Activated CD4-positive, alpha-beta memory T cell treated with anti-CD3 and anti-CD28 coated beads for 36 hours (primary cell): ENCODE measurements at regions of chr11 and their contacts with region 1.

Region 1: GRCh38 chr11:47213985-47214564 is 699 bp upstream of the DDB2 start:
- DNase-seq: peak; percentile 94
- H3K4me3 Mint-ChIP-seq: peak overlapping the region; percentile 97
- H3K27ac Mint-ChIP-seq: peak overlapping the region; percentile 99
- H3K4me1 Mint-ChIP-seq: peaks cover 28% of the 10 kb centered on the region
- H3K27me3 Mint-ChIP-seq: no peaks in the 10 kb centered on the region

Region 2: DNA sequence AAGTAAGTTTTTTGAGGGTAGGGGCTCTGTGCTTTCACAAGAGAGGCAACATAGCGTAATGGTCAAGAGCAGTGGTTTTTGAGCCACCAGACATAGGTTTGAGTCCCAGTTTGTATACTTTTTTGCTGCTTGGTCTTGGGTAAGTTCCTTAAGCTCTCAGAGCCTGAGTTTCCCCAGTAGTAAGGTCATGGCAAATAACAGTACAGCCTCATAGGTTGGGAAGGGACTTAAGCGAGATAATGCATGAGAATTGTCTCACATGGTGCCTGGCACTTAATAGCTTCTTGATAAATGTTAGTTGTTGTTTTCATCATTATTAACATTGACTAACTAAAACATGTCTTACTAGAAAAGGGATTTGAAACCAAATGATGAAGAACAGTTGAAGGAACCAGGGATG is 120.5 kb before region 1 on chr11:
- CTCF ChIA-PET with region 1: no interaction called
- POLR2A ChIA-PET with region 1: no interaction called
- intact Hi-C with region 1: no loop called
- DNase-seq: no peak
- H3K4me3 Mint-ChIP-seq: no peak overlapping the region
- H3K27ac Mint-ChIP-seq: no peak overlapping the region
- H3K4me1 Mint-ChIP-seq: no peaks in the 10 kb centered on the region
- H3K27me3 Mint-ChIP-seq: no peaks in the 10 kb centered on the region

Region 3: DNA sequence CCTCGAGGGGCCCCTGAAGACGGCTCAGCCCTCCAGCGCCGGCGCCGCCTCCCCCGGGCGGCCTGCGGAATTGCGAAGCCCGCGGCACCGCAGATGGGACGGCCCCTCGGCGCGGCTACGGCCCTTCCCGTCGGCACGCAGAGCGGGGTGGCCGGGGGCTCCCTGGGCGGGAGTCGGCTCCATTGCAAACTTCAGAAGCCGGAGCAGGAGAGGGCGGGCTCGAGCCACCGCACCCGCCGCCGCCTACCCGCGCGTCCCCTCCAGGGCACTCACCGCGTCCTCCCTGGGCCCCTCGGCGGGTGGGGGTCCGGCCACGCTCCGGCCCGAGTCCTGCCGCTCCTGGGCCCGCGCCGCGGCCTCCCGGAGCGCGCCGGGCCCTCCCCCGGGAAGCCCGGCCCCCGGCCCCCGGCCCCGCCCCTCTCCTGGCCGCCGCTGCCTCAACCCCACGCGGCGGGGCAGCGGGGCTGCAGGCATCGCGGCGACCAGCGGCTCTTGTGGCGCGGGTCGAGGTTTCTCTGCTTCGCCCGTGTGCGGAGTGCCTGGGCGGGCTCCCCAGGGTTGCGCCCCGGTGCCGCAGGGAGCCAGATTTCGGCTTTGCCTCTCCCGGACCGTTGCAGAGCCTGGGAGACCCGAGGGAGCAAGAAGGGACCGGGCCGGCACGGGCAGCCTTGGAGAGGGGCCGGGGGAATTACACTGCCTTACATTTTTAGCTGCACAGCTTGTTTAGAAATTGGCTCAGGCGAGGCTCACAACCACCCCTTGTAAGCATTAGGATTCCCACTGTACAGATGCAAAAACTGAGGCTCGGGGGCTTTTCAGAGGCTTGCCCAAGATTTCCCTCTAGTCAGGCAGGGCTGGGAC is 27.8 kb before region 1 on chr11 and contains the start of gene PACSIN3:
- CTCF ChIA-PET with region 1: interaction called, 3 read pairs
- POLR2A ChIA-PET with region 1: interaction called, 12 read pairs
- intact Hi-C with region 1: loop called (anchors 2 kb)
- DNase-seq: peak; percentile 52
- H3K4me3 Mint-ChIP-seq: peak within 1 kb of the TSS; percentile 68
- H3K27ac Mint-ChIP-seq: no peak within 1 kb of the TSS
- H3K4me1 Mint-ChIP-seq: peaks cover 9% of the 10 kb centered on the region
- H3K27me3 Mint-ChIP-seq: peaks cover 23% of the 10 kb centered on the region
- total RNA-seq, gene PACSIN3: 5.3 to 6.0 TPM

Region 4: GRCh38 chr11:47225552-47226400 is 11.7 kb after region 1 on chr11:
- CTCF ChIA-PET with region 1: no interaction called
- POLR2A ChIA-PET with region 1: interaction called, 8 read pairs
- intact Hi-C with region 1: loop called (anchors 1 kb)
- DNase-seq: peak; percentile 57
- H3K4me3 Mint-ChIP-seq: peak overlapping the region; percentile 7
- H3K27ac Mint-ChIP-seq: peak overlapping the region; percentile 44
- H3K4me1 Mint-ChIP-seq: peaks cover 24% of the 10 kb centered on the region
- H3K27me3 Mint-ChIP-seq: no peaks in the 10 kb centered on the region

Region 5: DNA sequence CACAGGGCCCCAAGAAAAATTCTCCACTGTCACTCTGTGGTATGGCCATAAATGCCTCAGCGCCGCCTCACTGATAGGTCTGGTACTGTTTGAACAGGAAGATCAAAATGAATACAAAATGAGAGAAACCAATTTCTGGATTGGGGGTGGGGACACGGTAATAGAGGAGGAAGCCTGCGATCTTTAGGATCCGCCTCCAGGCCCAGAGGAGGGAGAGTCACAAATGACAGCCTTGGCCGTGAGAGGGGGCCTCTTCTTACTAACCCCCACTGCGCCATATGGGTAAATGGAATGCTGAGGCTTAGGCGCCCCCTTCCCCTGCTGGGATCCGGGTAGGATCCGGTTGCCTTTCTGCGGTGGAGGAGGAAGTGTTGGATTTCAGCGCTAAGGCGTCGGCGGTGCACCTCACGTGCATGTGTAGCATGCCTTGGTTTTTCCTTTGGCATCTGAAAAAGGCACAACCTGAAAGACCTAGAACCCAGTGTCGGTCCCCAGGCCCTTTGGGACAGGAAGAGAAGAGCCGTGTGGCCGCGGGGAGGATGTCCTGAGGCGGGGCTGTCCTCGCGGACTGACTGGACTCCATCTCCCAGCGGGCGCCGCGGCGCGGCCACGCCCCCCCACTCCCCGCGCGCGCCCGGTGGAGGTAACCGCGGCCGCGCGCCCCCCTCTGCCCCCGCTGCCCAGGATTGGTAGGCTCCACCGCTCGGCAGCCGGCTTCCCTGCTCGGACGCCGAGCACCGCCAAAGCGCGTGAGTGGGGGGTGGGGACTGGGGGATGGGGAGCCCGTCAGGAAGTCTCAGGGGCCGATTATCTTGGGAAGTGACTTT is 55.1 kb after region 1 on chr11:
- CTCF ChIA-PET with region 1: interaction called, 3 read pairs
- POLR2A ChIA-PET with region 1: interaction called, 20 read pairs
- intact Hi-C with region 1: loop called (anchors 1 kb)
- DNase-seq: peak; percentile 90
- H3K4me3 Mint-ChIP-seq: peak overlapping the region; percentile 84
- H3K27ac Mint-ChIP-seq: peak overlapping the region; percentile 99
- H3K4me1 Mint-ChIP-seq: peaks cover 44% of the 10 kb centered on the region
- H3K27me3 Mint-ChIP-seq: no peaks in the 10 kb centered on the region